CD8-positive, alpha-beta T cell (primary cell): ENCODE measurements at regions of chr14 and their contacts with region 1.

Region 1: DNA sequence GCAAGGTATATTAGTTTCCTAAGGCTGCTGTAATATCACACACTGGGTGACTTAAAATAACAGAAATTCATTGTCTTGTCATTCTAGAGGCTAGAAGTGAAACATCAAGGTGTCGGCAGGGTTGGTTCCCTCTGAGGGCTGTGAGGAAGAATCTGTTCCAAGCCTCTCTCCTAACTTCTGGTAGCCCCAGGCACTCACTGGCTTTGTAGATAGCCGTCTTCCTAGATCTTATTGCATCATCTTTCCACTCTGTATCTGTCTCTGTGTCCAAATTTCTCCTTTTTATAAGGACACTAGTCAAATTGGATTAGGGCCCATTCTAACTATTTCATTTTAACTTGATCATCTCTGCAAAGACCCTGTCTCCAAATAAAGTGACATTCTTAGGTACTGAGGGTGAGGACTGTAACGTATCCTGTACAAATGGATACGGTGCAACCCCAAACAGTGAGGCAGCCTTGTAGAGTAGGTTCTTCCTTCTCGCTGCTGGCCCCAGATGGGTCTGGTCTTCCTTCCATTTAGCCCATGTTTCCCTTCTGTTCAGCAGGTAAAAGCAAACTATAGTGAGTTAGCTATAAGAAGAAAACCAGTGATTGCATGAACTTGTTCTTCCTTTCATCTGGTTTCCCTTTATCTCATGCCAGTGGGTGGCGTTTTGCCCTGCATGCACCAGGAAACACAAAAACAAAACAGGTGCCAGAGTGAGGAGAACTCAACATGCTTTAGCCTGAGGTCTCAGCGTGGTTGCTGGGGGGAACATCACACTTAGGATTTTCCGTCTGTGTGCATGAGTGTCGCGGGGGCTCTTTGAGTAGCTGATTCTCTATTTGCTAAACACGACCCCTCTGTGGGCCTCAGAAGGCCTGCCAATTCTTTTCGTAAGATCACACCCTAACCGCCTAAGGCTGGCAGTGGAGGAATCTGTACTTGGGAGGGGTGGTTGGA is 19.5 kb downstream of the TTC9 start:
- DNase-seq: peak; percentile 25 to 84 (median 65)
- ATAC-seq: peak; percentile 76
- H3K4me3 ChIP-seq: peak overlapping the region in 1 of 2 experiments; percentile 18
- H3K4me3 Mint-ChIP-seq: peak overlapping the region; percentile 78
- H3K27ac ChIP-seq: peak overlapping the region; percentile 44 to 50
- H3K27ac Mint-ChIP-seq: peak overlapping the region; percentile 89
- H3K4me1 ChIP-seq: peaks cover 87% of the 10 kb centered on the region
- H3K4me1 Mint-ChIP-seq: peaks cover 92% of the 10 kb centered on the region
- H3K27me3 ChIP-seq: no peaks in the 10 kb centered on the region
- H3K27me3 Mint-ChIP-seq: no peaks in the 10 kb centered on the region
- CTCF ChIP-seq: no peak

Region 2: DNA sequence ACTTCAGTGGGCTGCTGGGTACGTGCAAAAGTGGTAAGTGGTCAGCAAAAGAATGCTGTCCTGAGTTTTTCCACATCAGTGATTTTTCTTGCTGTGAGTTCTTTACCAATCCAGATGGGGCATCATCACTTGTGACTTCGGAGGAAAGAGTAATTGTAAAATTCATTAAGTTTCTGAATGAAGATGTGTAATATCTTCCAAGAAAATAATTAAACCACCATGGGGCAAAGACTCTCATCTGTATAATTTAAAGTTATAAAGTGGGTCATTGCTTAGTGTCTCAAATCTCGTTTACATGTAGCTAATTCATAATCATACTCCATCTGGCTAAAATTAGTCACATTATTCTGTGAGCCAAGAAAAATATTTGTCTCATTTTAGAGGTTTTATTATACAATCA is 50.0 kb before region 1 on chr14:
- CTCF ChIA-PET with region 1: no interaction called
- POLR2A ChIA-PET with region 1: no interaction called
- intact Hi-C with region 1: no loop called
- DNase-seq: no peak
- ATAC-seq: no peak
- H3K4me3 ChIP-seq: no peak overlapping the region
- H3K4me3 Mint-ChIP-seq: no peak overlapping the region
- H3K27ac ChIP-seq: no peak overlapping the region
- H3K27ac Mint-ChIP-seq: no peak overlapping the region
- H3K4me1 ChIP-seq: no peaks in the 10 kb centered on the region
- H3K4me1 Mint-ChIP-seq: no peaks in the 10 kb centered on the region
- H3K27me3 ChIP-seq: peaks cover 2% of the 10 kb centered on the region in 2 experiments
- H3K27me3 Mint-ChIP-seq: peaks cover 6% of the 10 kb centered on the region
- CTCF ChIP-seq: no peak

Region 3: GRCh38 chr14:70648346-70648745 is 12.9 kb before region 1 on chr14:
- CTCF ChIA-PET with region 1: interaction called, 10 read pairs
- POLR2A ChIA-PET with region 1: interaction called, 32 read pairs
- intact Hi-C with region 1: loop called (anchors 1 to 2 kb)
- DNase-seq: no peak
- ATAC-seq: no peak
- H3K4me3 ChIP-seq: no peak overlapping the region
- H3K4me3 Mint-ChIP-seq: no peak overlapping the region
- H3K27ac ChIP-seq: no peak overlapping the region
- H3K27ac Mint-ChIP-seq: peak overlapping the region; percentile 43
- H3K4me1 ChIP-seq: peaks cover 79% of the 10 kb centered on the region
- H3K4me1 Mint-ChIP-seq: peaks cover 90% of the 10 kb centered on the region
- H3K27me3 ChIP-seq: no peaks in the 10 kb centered on the region
- H3K27me3 Mint-ChIP-seq: no peaks in the 10 kb centered on the region
- CTCF ChIP-seq: no peak

Region 4: GRCh38 chr14:70707138-70708038 is 46.2 kb after region 1 on chr14:
- CTCF ChIA-PET with region 1: interaction called, 38 read pairs
- POLR2A ChIA-PET with region 1: interaction called, 4 read pairs
- intact Hi-C with region 1: no loop called
- DNase-seq: no peak
- ATAC-seq: no peak
- H3K4me3 ChIP-seq: no peak overlapping the region
- H3K4me3 Mint-ChIP-seq: no peak overlapping the region
- H3K27ac ChIP-seq: no peak overlapping the region
- H3K27ac Mint-ChIP-seq: no peak overlapping the region
- H3K4me1 ChIP-seq: no peaks in the 10 kb centered on the region
- H3K4me1 Mint-ChIP-seq: no peaks in the 10 kb centered on the region
- H3K27me3 ChIP-seq: no peaks in the 10 kb centered on the region
- H3K27me3 Mint-ChIP-seq: no peaks in the 10 kb centered on the region
- CTCF ChIP-seq: no peak